ENCODE measurements at regions of chr4 and their contacts with region 1.

Region 1: DNA sequence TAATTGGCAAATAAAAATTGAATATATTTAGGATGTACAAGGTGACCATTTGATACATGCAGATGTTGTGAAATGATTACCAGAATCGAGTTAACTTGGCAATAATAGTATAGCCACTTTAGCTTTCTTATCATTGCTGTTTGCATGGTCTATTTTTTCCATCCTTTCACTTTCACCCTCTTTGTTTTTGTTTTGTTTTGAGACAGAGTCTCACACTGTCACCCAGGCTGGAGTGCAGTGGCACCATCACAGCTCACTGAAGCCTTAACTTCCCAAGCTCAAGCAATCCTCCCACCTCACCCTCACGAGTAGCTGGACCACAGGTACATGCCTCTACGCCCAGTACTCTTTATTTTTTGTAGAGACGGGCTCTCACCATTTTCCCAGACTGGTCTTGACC is 218.6 kb upstream of the ADGRL3 start:
- DNase-seq: no peak
- ATAC-seq: no peak
- H3K4me3 ChIP-seq: no peak overlapping the region
- H3K4me3 Mint-ChIP-seq: no peak overlapping the region
- H3K27ac ChIP-seq: no peak overlapping the region
- H3K27ac Mint-ChIP-seq: no peak overlapping the region
- H3K4me1 ChIP-seq: no peaks in the 10 kb centered on the region
- H3K4me1 Mint-ChIP-seq: no peaks in the 10 kb centered on the region
- H3K27me3 ChIP-seq: no peaks in the 10 kb centered on the region
- H3K27me3 Mint-ChIP-seq: no peaks in the 10 kb centered on the region

Region 2: GRCh38 chr4:60443796-60444195 is 537.7 kb before region 1 on chr4:
- CTCF ChIA-PET with region 1: no interaction called
- POLR2A ChIA-PET with region 1: no interaction called
- DNase-seq: no peak
- ATAC-seq: no peak
- H3K4me3 ChIP-seq: no peak overlapping the region
- H3K4me3 Mint-ChIP-seq: no peak overlapping the region
- H3K27ac ChIP-seq: no peak overlapping the region
- H3K27ac Mint-ChIP-seq: no peak overlapping the region
- H3K4me1 ChIP-seq: no peaks in the 10 kb centered on the region
- H3K4me1 Mint-ChIP-seq: no peaks in the 10 kb centered on the region
- H3K27me3 ChIP-seq: no peaks in the 10 kb centered on the region
- H3K27me3 Mint-ChIP-seq: no peaks in the 10 kb centered on the region

Region 3: GRCh38 chr4:60938621-60939020 is 42.9 kb before region 1 on chr4:
- CTCF ChIA-PET with region 1: interaction called in 1 of 2 experiments, 10 read pairs
- POLR2A ChIA-PET with region 1: no interaction called
- DNase-seq: no peak
- ATAC-seq: no peak
- H3K4me3 ChIP-seq: no peak overlapping the region
- H3K4me3 Mint-ChIP-seq: no peak overlapping the region
- H3K27ac ChIP-seq: no peak overlapping the region
- H3K27ac Mint-ChIP-seq: no peak overlapping the region
- H3K4me1 ChIP-seq: no peaks in the 10 kb centered on the region
- H3K4me1 Mint-ChIP-seq: no peaks in the 10 kb centered on the region
- H3K27me3 ChIP-seq: no peaks in the 10 kb centered on the region
- H3K27me3 Mint-ChIP-seq: no peaks in the 10 kb centered on the region

Region 4: GRCh38 chr4:61003301-61003700 is 21.8 kb after region 1 on chr4:
- CTCF ChIA-PET with region 1: no interaction called
- POLR2A ChIA-PET with region 1: no interaction called
- DNase-seq: no peak
- ATAC-seq: no peak
- H3K4me3 ChIP-seq: no peak overlapping the region
- H3K4me3 Mint-ChIP-seq: no peak overlapping the region
- H3K27ac ChIP-seq: no peak overlapping the region
- H3K27ac Mint-ChIP-seq: no peak overlapping the region
- H3K4me1 ChIP-seq: no peaks in the 10 kb centered on the region
- H3K4me1 Mint-ChIP-seq: no peaks in the 10 kb centered on the region
- H3K27me3 ChIP-seq: no peaks in the 10 kb centered on the region
- H3K27me3 Mint-ChIP-seq: no peaks in the 10 kb centered on the region

Region 5: DNA sequence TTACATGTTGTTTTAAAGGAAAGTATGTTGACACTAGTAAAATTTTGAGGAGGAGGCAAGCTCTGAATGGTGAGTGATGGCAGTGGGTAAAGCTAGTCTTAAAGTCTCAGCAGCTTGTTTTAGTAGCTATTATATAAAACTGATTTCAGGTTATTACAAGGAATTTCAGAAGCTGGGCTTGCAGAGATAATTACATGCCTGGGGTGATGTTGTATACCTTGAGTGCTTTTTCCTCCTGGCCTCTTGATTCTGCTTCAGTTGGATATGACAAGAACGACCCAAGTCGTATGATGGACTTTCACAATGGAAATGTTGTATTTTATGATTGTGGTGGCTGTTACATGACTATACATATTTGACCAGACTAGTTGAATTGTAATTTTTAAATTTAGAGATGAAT is 43.1 kb after region 1 on chr4:
- CTCF ChIA-PET with region 1: no interaction called
- POLR2A ChIA-PET with region 1: no interaction called
- DNase-seq: no peak
- ATAC-seq: no peak
- H3K4me3 ChIP-seq: no peak overlapping the region
- H3K4me3 Mint-ChIP-seq: no peak overlapping the region
- H3K27ac ChIP-seq: no peak overlapping the region
- H3K27ac Mint-ChIP-seq: no peak overlapping the region
- H3K4me1 ChIP-seq: no peaks in the 10 kb centered on the region
- H3K4me1 Mint-ChIP-seq: no peaks in the 10 kb centered on the region
- H3K27me3 ChIP-seq: no peaks in the 10 kb centered on the region
- H3K27me3 Mint-ChIP-seq: no peaks in the 10 kb centered on the region